Heart right ventricle (tissue), 16 donors: ENCODE measurements at regions of chr6 and their contacts with region 1.

Region 1: GRCh38 chr6:41374618-41375590 is 39.5 kb downstream of the NCR2 start:
- DNase-seq: no peak
- ATAC-seq: peak in 5 of 8 donors; percentile 32 to 53 (median 48)
- H3K4me3 ChIP-seq: peak overlapping the region in 5 of 10 donors; percentile 6 to 26 (median 20)
- H3K27ac ChIP-seq: no peak overlapping the region
- H3K4me1 ChIP-seq: peaks cover 5 to 46% (median 42%) of the 10 kb centered on the region in 9 donors
- H3K27me3 ChIP-seq: peaks cover 15 to 95% (median 77%) of the 10 kb centered on the region in 7 donors
- CTCF ChIP-seq: no peak

Region 2: GRCh38 chr6:39812853-39813533 is 1561.9 kb before region 1 on chr6:
- intact Hi-C with region 1: no loop called
- DNase-seq: no peak
- ATAC-seq: peak; percentile 25 to 73 (median 40)
- H3K4me3 ChIP-seq: no peak overlapping the region
- H3K27ac ChIP-seq: peak overlapping the region in 6 of 10 donors; percentile 23 to 53 (median 30)
- H3K4me1 ChIP-seq: peaks cover 0 to 64% (median 36%) of the 10 kb centered on the region in 9 donors
- H3K27me3 ChIP-seq: no peaks in the 10 kb centered on the region
- CTCF ChIP-seq: peak in 4 of 9 donors; percentile 18 to 37 (median 25)

Region 3: DNA sequence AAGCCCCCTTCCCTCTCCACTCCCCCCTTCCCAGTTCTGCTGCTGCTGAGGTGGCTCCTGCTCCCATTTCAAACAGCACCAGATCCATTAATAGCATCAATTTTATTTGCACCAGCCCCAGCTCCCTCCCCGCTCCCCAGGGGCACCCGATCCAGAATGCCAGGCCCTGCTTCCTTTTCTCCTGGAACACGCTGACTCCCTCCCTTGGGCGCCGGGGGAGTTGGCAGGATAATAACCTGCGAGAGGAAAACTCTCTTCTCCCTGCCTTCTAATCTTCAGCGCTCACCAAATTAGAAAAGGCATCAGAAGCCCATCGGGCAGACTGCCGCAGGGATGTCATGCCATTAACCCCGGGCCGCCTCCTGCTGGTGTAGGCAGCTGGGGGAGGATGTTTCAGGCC is 38.3 kb after region 1 on chr6:
- intact Hi-C with region 1: loop called in 2 of 10 experiments (anchors 5 kb)
- DNase-seq: no peak
- ATAC-seq: peak; percentile 18 to 80 (median 63)
- H3K4me3 ChIP-seq: no peak overlapping the region
- H3K27ac ChIP-seq: peak overlapping the region in 1 of 10 donors; percentile 43
- H3K4me1 ChIP-seq: peaks cover 0 to 6% (median 0%) of the 10 kb centered on the region in 9 donors
- H3K27me3 ChIP-seq: peaks cover 0 to 82% (median 55%) of the 10 kb centered on the region in 7 donors
- CTCF ChIP-seq: peak in 3 of 9 donors; percentile 8 to 22 (median 22)